GM12878 (cell line): ENCODE measurements at regions of chr5 and their contacts with region 1.

Region 1: GRCh38 chr5:159034083-159034824 is 65.5 kb downstream of the EBF1 start:
- DNase-seq: no peak
- ATAC-seq: peak; percentile 84
- H3K4me3 ChIP-seq: peak overlapping the region; percentile 33
- H3K27ac ChIP-seq: peak overlapping the region; percentile 61
- H3K4me1 ChIP-seq: peaks cover 37% of the 10 kb centered on the region
- H3K27me3 ChIP-seq: no peaks in the 10 kb centered on the region
- CTCF ChIP-seq: no peak
- EP300 ChIP-seq: no peak
- POLR2A ChIP-seq: no peak
- RAD21 ChIP-seq: no peak

Region 2: GRCh38 chr5:157997991-157998504 is 1036.2 kb before region 1 on chr5:
- CTCF ChIA-PET with region 1: no interaction called
- POLR2A ChIA-PET with region 1: no interaction called
- RAD21 ChIA-PET with region 1: no interaction called
- SMC1A ChIA-PET with region 1: no interaction called
- in situ Hi-C with region 1: no loop called
- intact Hi-C with region 1: no loop called
- DNase-seq: no peak
- ATAC-seq: no peak
- H3K4me3 ChIP-seq: no peak overlapping the region
- H3K27ac ChIP-seq: no peak overlapping the region
- H3K4me1 ChIP-seq: no peaks in the 10 kb centered on the region
- H3K27me3 ChIP-seq: no peaks in the 10 kb centered on the region
- CTCF ChIP-seq: no peak
- EP300 ChIP-seq: no peak
- POLR2A ChIP-seq: no peak
- RAD21 ChIP-seq: no peak

Region 3: DNA sequence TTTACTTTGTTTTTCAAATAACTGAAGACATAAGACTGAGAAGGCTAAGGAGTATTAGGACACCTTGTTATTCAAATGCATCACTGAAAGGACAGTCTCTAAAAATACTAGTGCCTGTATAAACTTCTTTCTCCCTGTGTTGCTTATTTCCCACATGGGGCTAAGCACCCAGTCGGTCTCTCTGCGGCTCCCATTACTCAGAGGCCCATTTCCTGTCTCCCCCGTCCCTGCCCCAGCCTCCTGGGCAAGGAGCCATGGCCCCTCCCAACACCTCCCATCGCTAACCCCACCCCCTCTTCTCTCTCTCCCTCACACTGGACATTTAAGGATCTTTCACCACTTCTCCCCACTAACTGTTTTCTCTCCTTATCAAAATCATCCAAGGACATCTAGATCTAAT is 16.5 kb before region 1 on chr5:
- CTCF ChIA-PET with region 1: interaction called, 4 read pairs
- POLR2A ChIA-PET with region 1: interaction called, 8 read pairs
- RAD21 ChIA-PET with region 1: interaction called, 5 read pairs
- SMC1A ChIA-PET with region 1: interaction called, 86 read pairs
- in situ Hi-C with region 1: no loop called
- intact Hi-C with region 1: no loop called
- DNase-seq: no peak
- ATAC-seq: peak; percentile 93
- H3K4me3 ChIP-seq: no peak overlapping the region
- H3K27ac ChIP-seq: peak overlapping the region; percentile 22
- H3K4me1 ChIP-seq: peaks cover 5% of the 10 kb centered on the region
- H3K27me3 ChIP-seq: no peaks in the 10 kb centered on the region
- CTCF ChIP-seq: no peak
- EP300 ChIP-seq: no peak
- POLR2A ChIP-seq: no peak
- RAD21 ChIP-seq: no peak

Region 4: DNA sequence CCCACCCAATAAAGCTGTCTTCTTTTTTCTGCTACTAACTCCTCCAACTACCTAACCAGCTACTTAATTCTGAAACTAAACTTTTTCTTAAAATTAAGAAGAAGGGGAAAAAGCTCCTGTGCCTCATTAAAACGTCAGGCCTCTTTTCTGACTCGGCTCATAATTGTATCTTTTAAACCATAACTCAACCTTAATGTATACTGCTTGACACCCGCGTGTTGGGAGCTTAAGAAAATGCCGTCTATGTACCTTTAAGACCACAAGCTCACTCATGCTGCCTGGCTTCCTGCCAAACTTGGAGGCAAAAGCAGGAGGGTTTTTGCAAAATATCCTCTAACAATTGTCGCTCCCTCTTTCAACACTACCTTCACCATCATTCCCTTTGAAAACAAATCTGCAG is 60.5 kb after region 1 on chr5:
- CTCF ChIA-PET with region 1: no interaction called
- POLR2A ChIA-PET with region 1: no interaction called
- RAD21 ChIA-PET with region 1: interaction called, 6 read pairs
- SMC1A ChIA-PET with region 1: interaction called, 33 read pairs
- in situ Hi-C with region 1: no loop called
- intact Hi-C with region 1: no loop called
- DNase-seq: no peak
- ATAC-seq: peak; percentile 35
- H3K4me3 ChIP-seq: peak overlapping the region; percentile 88
- H3K27ac ChIP-seq: peak overlapping the region; percentile 68
- H3K4me1 ChIP-seq: peaks cover 5% of the 10 kb centered on the region; the same call in 1 of the 2 replicates
- H3K27me3 ChIP-seq: no peaks in the 10 kb centered on the region
- CTCF ChIP-seq: no peak
- EP300 ChIP-seq: no peak
- POLR2A ChIP-seq: no peak
- RAD21 ChIP-seq: no peak

Region 5: DNA sequence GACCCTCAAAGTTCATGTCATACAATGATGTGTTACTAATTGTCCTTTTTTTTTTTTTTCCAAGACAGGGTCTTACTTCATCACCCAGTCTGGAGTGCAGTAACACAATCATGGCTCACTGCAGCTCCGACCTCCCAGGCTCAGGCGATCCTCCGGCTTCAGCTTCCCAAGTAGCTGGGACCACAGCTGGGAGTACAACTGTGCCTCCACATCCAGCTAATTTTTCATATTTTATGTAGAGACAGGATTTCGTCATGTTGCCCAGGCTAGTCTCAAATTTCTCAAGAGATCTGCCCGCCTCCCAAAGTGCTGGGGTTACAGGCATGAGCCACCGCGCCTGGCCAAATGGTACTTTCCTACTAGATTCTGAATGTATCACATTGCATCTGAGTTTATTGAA is 114.8 kb after region 1 on chr5:
- CTCF ChIA-PET with region 1: no interaction called
- POLR2A ChIA-PET with region 1: no interaction called
- RAD21 ChIA-PET with region 1: no interaction called
- SMC1A ChIA-PET with region 1: no interaction called
- in situ Hi-C with region 1: no loop called
- intact Hi-C with region 1: no loop called
- DNase-seq: no peak
- ATAC-seq: no peak
- H3K4me3 ChIP-seq: no peak overlapping the region
- H3K27ac ChIP-seq: no peak overlapping the region
- H3K4me1 ChIP-seq: no peaks in the 10 kb centered on the region
- H3K27me3 ChIP-seq: no peaks in the 10 kb centered on the region
- CTCF ChIP-seq: no peak
- EP300 ChIP-seq: no peak
- POLR2A ChIP-seq: no peak
- RAD21 ChIP-seq: no peak

Region 6: DNA sequence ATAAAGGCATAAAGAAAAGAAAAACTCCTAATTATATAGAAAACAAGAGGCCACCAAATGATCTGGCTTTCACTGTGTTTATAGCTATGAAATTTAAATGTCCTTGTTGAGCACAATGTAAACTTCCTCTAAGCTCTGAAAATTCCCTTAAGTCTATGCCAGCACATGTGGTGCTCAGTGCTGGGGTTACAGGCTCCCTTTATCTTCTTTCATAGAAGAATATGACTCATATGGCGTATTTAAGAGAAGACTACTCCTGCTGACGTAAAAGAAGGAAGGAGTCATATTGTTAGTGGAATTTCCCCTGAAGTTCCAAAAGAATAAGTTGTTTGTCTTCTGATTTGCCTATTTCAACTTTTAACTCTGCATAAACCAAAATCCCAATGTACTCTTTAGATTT is 144.7 kb after region 1 on chr5:
- CTCF ChIA-PET with region 1: no interaction called
- POLR2A ChIA-PET with region 1: no interaction called
- RAD21 ChIA-PET with region 1: no interaction called
- SMC1A ChIA-PET with region 1: no interaction called
- in situ Hi-C with region 1: no loop called
- intact Hi-C with region 1: no loop called
- DNase-seq: peak; percentile 51
- ATAC-seq: peak; percentile 84
- H3K4me3 ChIP-seq: no peak overlapping the region
- H3K27ac ChIP-seq: peak overlapping the region; percentile 81
- H3K4me1 ChIP-seq: peaks cover 12% of the 10 kb centered on the region
- H3K27me3 ChIP-seq: no peaks in the 10 kb centered on the region
- CTCF ChIP-seq: no peak
- EP300 ChIP-seq: peak; percentile 74 to 87; a peak in 3 of 4 replicates
- POLR2A ChIP-seq: no peak
- RAD21 ChIP-seq: no peak